GM13977 (cell line): ENCODE measurements at regions of chr18 and their contacts with region 1.

Region 1: GRCh38 chr18:23812546-23813440 is 123.5 kb downstream of the LAMA3 start:
- DNase-seq: peak; percentile 28
- CTCF ChIP-seq: peak; percentile 53

Region 2: DNA sequence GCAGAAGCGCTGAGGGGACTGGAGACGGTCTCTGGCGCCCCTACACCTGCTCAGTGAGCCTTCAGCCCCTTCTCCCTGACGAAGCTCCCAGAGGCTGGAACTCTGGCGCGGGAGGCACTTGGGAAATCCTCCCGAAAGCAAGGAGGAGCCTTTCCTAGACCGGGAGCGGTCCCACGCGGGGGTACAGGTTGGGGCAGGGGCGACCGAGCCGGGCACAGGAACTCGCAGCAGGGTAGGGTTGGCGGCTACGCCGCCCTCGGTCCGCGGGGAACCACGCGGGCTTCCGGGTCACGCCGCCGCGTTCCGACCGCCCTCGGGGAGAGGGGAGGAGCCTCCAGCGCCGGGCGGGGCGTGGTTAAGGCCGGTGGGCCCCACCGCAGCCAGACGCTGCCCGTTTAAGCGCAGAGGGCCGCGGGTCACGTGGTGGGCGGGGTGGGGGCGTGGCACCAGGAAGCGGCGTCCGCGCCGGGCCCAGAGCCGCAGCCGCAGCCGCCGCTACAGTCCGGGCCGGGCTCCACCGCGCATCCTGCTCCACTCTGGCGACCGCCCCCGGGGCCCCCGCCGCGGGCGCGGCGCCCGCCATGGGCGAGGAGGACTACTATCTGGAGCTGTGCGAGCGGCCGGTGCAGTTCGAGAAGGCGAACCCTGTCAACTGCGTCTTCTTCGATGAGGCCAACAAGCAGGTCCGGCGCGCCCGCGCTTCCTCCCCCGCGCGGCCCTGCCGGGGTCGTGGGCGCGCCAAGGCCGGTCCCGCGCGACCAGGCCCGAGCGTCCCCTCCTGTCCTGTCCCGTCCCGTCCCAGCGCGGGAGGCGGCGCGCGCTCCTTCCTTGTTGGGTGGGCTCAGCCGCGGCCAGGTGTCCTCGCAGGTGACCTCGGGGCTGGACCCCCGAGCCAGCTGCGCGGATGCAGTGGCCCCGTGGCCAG is 309.5 kb before region 1 on chr18 and contains the start of gene RMC1:
- in situ Hi-C with region 1: loop called (anchors 25 kb)
- DNase-seq: peak; percentile 96
- CTCF ChIP-seq: peak; percentile 25

Region 3: GRCh38 chr18:23629444-23629946 is 183.3 kb before region 1 on chr18:
- in situ Hi-C with region 1: loop called (anchors 25 kb)
- DNase-seq: peak; percentile 49
- CTCF ChIP-seq: peak; percentile 32

Region 4: DNA sequence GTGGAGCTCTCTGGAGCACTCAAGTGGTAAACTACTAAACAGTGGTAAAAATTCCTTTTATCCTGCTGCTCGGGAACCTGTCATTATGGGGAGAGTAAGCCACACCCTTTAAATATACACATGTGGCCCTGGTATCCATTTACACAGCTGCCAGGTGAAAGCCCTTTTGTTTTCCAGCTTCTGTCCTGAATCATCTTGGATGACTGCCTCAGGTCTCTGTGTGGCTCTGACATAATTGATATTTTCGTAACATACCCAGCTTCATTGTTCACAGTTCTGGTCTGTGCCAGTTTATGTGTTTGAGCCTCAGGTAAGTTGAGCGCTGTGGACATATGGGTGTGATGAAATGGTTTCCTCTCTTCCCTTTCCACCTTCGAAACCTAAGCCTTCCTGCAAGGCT is 186.0 kb after region 1 on chr18:
- in situ Hi-C with region 1: no loop called
- DNase-seq: no peak
- CTCF ChIP-seq: no peak

Region 5: GRCh38 chr18:24016643-24017042 is 203.8 kb after region 1 on chr18:
- in situ Hi-C with region 1: no loop called
- DNase-seq: no peak
- CTCF ChIP-seq: peak; percentile 41

Region 6: GRCh38 chr18:24616653-24617052 is 803.9 kb after region 1 on chr18:
- in situ Hi-C with region 1: no loop called
- DNase-seq: no peak
- CTCF ChIP-seq: no peak